GM12878 (cell line): ENCODE measurements at regions of chr17 and their contacts with region 1.

Region 1: DNA sequence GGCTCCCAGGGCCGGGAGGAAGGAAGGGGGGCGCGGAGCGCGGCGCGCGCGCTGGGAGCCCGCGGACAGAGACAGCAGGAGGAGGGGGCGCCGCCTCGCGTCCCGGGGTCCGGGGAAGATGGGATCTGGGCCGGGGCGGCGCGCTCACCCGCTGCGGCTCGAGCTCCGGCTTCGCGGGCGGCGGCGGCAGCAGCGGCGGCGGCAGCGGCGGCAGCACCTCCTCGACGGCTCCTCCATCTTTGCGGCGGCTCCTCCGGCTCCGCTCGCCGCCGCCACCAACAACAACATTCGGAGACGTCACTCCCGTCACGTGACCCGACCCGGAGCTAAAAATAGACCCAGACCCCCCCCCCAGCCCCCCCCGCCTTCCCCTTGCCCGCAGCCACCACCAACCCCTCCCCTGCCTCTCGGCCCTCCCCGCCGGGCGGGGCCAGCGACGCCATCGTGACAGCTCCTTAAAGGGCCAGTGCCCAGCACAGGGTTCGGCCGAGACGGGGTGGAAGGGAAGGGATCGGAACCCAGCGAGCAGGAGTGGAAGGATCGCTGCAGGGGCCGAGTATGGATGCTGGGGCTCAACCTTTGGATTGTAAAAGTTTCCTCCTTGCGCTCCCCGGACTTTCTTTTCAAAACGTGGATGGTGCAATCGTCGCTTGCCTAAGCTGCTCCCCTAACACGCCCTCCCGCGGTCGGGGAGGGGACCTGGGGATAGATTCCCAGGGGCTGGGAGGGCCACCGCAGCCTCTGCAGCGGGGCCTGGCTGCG is at the start of gene HDAC5:
- DNase-seq: peak; percentile 73
- ATAC-seq: peak; percentile 97
- H3K4me3 ChIP-seq: peak within 1 kb of the TSS; percentile 95
- H3K27ac ChIP-seq: peak within 1 kb of the TSS; percentile 59
- H3K4me1 ChIP-seq: peaks cover 8% of the 10 kb centered on the region; the same call in 1 of the 2 replicates
- H3K27me3 ChIP-seq: no peaks in the 10 kb centered on the region
- CTCF ChIP-seq: peak; percentile 53 to 69 (median 67)
- EP300 ChIP-seq: no peak
- POLR2A ChIP-seq: peak; percentile 71
- RAD21 ChIP-seq: peak; percentile 38; the same call in 1 of the 2 replicates
- polyA plus RNA-seq, gene HDAC5: 1.1 to 2.0 TPM

Region 2: GRCh38 chr17:43760254-43760852 is 363.2 kb before region 1 on chr17:
- CTCF ChIA-PET with region 1: no interaction called
- POLR2A ChIA-PET with region 1: no interaction called
- RAD21 ChIA-PET with region 1: no interaction called
- SMC1A ChIA-PET with region 1: no interaction called
- in situ Hi-C with region 1: no loop called
- intact Hi-C with region 1: no loop called
- DNase-seq: peak; percentile 53
- ATAC-seq: peak; percentile 96
- H3K4me3 ChIP-seq: no peak overlapping the region
- H3K27ac ChIP-seq: no peak overlapping the region
- H3K4me1 ChIP-seq: no peaks in the 10 kb centered on the region
- H3K27me3 ChIP-seq: peaks cover 5 to 6% of the 10 kb centered on the region in 2 experiments
- CTCF ChIP-seq: peak; percentile 95 to 100 (median 100); a peak in 5 of 6 replicates
- EP300 ChIP-seq: no peak
- POLR2A ChIP-seq: no peak
- RAD21 ChIP-seq: peak; percentile 96

Region 3: GRCh38 chr17:44095642-44096496 is 27.7 kb before region 1 on chr17:
- CTCF ChIA-PET with region 1: interaction called, 11 read pairs
- POLR2A ChIA-PET with region 1: interaction called, 3 read pairs
- RAD21 ChIA-PET with region 1: interaction called, 5 read pairs
- SMC1A ChIA-PET with region 1: interaction called, 3 read pairs
- in situ Hi-C with region 1: no loop called
- intact Hi-C with region 1: no loop called
- DNase-seq: no peak
- ATAC-seq: peak; percentile 80
- H3K4me3 ChIP-seq: peak overlapping the region; percentile 31; the same call in 1 of the 2 replicates
- H3K27ac ChIP-seq: peak overlapping the region; percentile 67
- H3K4me1 ChIP-seq: peaks cover 24% of the 10 kb centered on the region
- H3K27me3 ChIP-seq: no peaks in the 10 kb centered on the region
- CTCF ChIP-seq: no peak
- EP300 ChIP-seq: no peak
- POLR2A ChIP-seq: 0 out of 2 replicates have a peak, but pooled peaks have one; percentile 28
- RAD21 ChIP-seq: no peak

Region 4: DNA sequence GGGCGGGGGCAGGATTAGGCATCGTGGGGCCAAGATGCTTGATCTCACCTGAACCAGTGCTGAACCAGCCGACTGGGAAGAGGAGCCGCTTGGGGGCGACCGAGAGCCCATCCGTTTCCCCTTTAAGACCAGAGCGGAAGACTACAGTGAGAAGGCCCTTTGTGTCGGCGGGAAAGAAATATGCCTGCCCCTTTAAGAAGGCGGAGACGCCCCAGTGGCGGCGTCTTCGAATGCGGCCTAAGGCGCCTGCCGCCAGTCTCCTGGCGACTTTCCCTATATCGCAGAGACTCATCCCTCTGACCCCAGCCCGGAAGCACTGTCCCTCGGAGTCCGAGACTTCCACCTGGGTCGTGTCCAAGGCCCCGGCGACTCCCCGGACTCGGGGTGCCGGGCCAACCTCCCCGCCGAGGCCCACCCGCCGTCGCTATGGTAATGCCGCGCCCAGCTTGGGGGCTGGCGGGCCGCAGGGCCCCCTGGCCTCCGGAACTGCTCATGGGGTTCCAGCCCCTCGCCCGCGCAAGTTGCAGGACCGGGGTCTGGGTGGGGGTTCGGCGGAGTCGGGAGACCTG is 18.3 kb after region 1 on chr17 and contains the start of gene HROB:
- CTCF ChIA-PET with region 1: interaction called, 6 read pairs
- POLR2A ChIA-PET with region 1: interaction called, 4 read pairs
- RAD21 ChIA-PET with region 1: interaction called, 3 read pairs
- SMC1A ChIA-PET with region 1: interaction called, 9 read pairs
- in situ Hi-C with region 1: no loop called
- intact Hi-C with region 1: loop called (anchors 2 kb)
- DNase-seq: peak; percentile 87
- ATAC-seq: peak; percentile 94
- H3K4me3 ChIP-seq: peak within 1 kb of the TSS; percentile 85
- H3K27ac ChIP-seq: peak within 1 kb of the TSS; percentile 91
- H3K4me1 ChIP-seq: peaks cover 15% of the 10 kb centered on the region
- H3K27me3 ChIP-seq: no peaks in the 10 kb centered on the region
- CTCF ChIP-seq: peak; percentile 92 to 95 (median 94); a peak in 5 of 6 replicates
- EP300 ChIP-seq: no peak
- POLR2A ChIP-seq: peak; percentile 49; the same call in 1 of the 2 replicates
- RAD21 ChIP-seq: peak; percentile 54
- polyA plus RNA-seq, gene HROB: 4.0 to 4.7 TPM